Activated CD4-positive, alpha-beta memory T cell treated with anti-CD3 and anti-CD28 coated beads, Interleukin-2, amount 10 ng/mL, durations not matched to agents 7 days and 5 days (primary cell): ENCODE measurements at regions of chr20 and their contacts with region 1.

Region 1: GRCh38 chr20:41425180-41425884 is 58.7 kb upstream of the EMILIN3 start:
- DNase-seq: no peak
- H3K4me3 Mint-ChIP-seq: no peak overlapping the region
- H3K27ac Mint-ChIP-seq: no peak overlapping the region
- H3K4me1 Mint-ChIP-seq: peaks cover 34% of the 10 kb centered on the region
- H3K27me3 Mint-ChIP-seq: no peaks in the 10 kb centered on the region

Region 2: GRCh38 chr20:41411391-41411847 is 13.9 kb before region 1 on chr20:
- CTCF ChIA-PET with region 1: interaction called, 13 read pairs
- POLR2A ChIA-PET with region 1: no interaction called
- DNase-seq: no peak
- H3K4me3 Mint-ChIP-seq: no peak overlapping the region
- H3K27ac Mint-ChIP-seq: no peak overlapping the region
- H3K4me1 Mint-ChIP-seq: peaks cover 26% of the 10 kb centered on the region
- H3K27me3 Mint-ChIP-seq: no peaks in the 10 kb centered on the region

Region 3: GRCh38 chr20:41436679-41437078 is 11.3 kb after region 1 on chr20:
- CTCF ChIA-PET with region 1: no interaction called
- POLR2A ChIA-PET with region 1: no interaction called
- DNase-seq: no peak
- H3K4me3 Mint-ChIP-seq: no peak overlapping the region
- H3K27ac Mint-ChIP-seq: peak overlapping the region; percentile 28
- H3K4me1 Mint-ChIP-seq: peaks cover 34% of the 10 kb centered on the region
- H3K27me3 Mint-ChIP-seq: no peaks in the 10 kb centered on the region